Dendritic cell treated with granulocyte-macrophage colony-stimulating factor and Interleukin-4, amounts not matched to agents 40 ng/mL and 50 ng/mL, for 4 days (primary cell): ENCODE measurements at regions of chr6 and their contacts with region 1.

Region 1: DNA sequence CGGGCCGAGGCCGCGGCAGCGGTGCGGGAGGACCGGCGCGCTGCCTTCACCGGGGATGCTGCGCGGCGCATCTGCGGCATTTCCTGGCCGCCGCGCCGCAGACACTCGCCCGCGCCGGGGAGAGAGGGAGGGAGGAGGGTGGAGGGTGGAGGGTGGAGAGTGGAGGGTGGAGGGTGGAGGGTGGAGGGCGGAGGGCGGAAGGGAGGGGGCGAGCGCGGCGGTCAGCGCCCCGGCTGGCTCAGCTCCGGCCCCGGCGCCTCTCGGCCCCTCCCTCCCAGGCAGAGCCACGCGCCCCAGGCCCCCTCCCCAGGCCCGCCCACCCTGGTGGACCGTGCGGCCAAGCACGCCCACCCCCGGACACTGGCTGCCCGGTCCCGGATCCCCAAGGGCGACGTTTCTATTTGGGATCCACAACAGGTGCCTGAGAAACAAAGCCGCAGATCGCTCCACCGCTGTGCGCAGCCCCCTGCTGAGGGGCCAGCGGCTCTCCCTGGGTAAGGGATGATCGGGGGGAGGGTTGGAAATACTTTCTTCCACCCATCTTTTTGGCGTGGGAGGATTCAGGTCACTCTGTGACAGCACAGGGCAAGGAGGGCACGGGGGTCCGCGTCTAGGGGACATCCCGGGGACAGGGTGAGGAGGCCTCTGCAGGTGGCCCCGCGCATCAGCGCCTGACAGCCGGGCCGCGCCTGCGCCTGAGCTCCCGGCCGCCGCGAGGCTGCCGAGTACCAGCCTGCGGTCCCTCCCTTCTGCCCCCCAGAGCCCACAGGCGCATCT is 111.1 kb upstream of the BEND6 start:
- H3K4me3 Mint-ChIP-seq: peak overlapping the region; percentile 77
- H3K27ac Mint-ChIP-seq: peak overlapping the region; percentile 77
- H3K4me1 Mint-ChIP-seq: peaks cover 17% of the 10 kb centered on the region
- H3K27me3 Mint-ChIP-seq: peaks cover 10% of the 10 kb centered on the region

Region 2: GRCh38 chr6:56802584-56802983 is 41.2 kb before region 1 on chr6:
- intact Hi-C with region 1: loop called (anchors 5 kb)
- H3K4me3 Mint-ChIP-seq: no peak overlapping the region
- H3K27ac Mint-ChIP-seq: no peak overlapping the region
- H3K4me1 Mint-ChIP-seq: no peaks in the 10 kb centered on the region
- H3K27me3 Mint-ChIP-seq: no peaks in the 10 kb centered on the region

Region 3: GRCh38 chr6:56938649-56939191 is 95.0 kb after region 1 on chr6:
- intact Hi-C with region 1: no loop called
- H3K4me3 Mint-ChIP-seq: no peak overlapping the region
- H3K27ac Mint-ChIP-seq: no peak overlapping the region
- H3K4me1 Mint-ChIP-seq: peaks cover 7% of the 10 kb centered on the region
- H3K27me3 Mint-ChIP-seq: no peaks in the 10 kb centered on the region